ENCODE measurements at regions of chr19 and their contacts with region 1.

Region 1: GRCh38 chr19:18855647-18856384 is 24.1 kb downstream of the UPF1 start:
- DNase-seq: no peak
- ATAC-seq: no peak
- H3K4me3 ChIP-seq: no peak overlapping the region
- H3K4me3 Mint-ChIP-seq: no peak overlapping the region
- H3K27ac ChIP-seq: no peak overlapping the region
- H3K27ac Mint-ChIP-seq: no peak overlapping the region
- H3K4me1 ChIP-seq: peaks cover 0 to 7% of the 10 kb centered on the region in 2 donors
- H3K4me1 Mint-ChIP-seq: peaks cover under 1% of the 10 kb centered on the region
- H3K27me3 ChIP-seq: no peaks in the 10 kb centered on the region
- H3K27me3 Mint-ChIP-seq: no peaks in the 10 kb centered on the region
- CTCF ChIP-seq: no peak

Region 2: GRCh38 chr19:18636183-18636968 is 219.4 kb before region 1 on chr19:
- CTCF ChIA-PET with region 1: no interaction called
- POLR2A ChIA-PET with region 1: no interaction called
- intact Hi-C with region 1: no loop called
- DNase-seq: peak; percentile 98
- ATAC-seq: peak; percentile 87
- H3K4me3 ChIP-seq: peak overlapping the region in 4 of 5 experiments; percentile 71 to 95 (median 82)
- H3K4me3 Mint-ChIP-seq: peak overlapping the region; percentile 95
- H3K27ac ChIP-seq: peak overlapping the region; percentile 46 to 84
- H3K27ac Mint-ChIP-seq: peak overlapping the region; percentile 95
- H3K4me1 ChIP-seq: peaks cover 12 to 27% of the 10 kb centered on the region in 2 donors
- H3K4me1 Mint-ChIP-seq: peaks cover 25% of the 10 kb centered on the region
- H3K27me3 ChIP-seq: no peaks in the 10 kb centered on the region
- H3K27me3 Mint-ChIP-seq: peaks cover 3% of the 10 kb centered on the region
- CTCF ChIP-seq: no peak

Region 3: DNA sequence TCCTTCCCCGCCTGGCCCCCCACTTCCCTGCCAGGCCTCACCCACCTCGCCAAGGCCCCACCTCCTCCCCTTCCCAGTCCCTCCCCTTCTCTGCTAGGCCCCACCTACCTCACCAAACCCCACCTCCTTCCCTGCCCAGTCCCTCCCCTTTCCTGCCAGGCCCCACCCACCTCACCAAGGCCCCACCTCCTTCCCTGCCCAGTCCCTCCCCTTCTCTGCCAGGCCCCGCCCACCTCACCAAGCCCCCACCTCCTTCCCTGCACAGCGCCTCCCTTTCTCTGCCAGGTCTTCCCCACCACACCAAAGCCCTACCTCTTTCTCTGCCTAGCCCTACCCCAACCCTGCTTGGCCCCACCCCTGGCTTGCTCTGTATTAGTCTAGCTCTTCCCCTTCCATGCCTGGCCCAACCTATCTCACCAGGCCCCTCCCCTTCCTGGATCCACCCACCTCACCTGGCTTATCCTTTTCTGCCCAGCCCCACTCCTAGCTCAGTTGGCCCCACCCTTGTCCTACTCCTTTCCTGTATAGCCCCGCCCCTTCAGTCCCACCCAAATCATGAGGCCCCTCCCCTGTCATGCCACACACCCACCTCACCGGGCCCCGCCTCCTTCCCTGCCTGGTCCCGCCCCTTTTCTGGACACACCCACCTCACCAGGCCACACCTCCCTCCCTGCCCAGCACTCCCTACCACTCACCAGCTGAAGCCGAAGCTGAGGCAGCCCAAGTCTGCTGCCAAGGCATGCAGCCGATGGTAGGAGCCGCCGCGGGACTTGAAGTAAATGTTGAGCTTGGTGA is 24.0 kb after region 1 on chr19:
- CTCF ChIA-PET with region 1: interaction called, 3 read pairs
- POLR2A ChIA-PET with region 1: interaction called, 10 read pairs
- intact Hi-C with region 1: no loop called
- DNase-seq: peak; percentile 34
- ATAC-seq: peak; percentile 39
- H3K4me3 ChIP-seq: no peak overlapping the region
- H3K4me3 Mint-ChIP-seq: no peak overlapping the region
- H3K27ac ChIP-seq: no peak overlapping the region
- H3K27ac Mint-ChIP-seq: no peak overlapping the region
- H3K4me1 ChIP-seq: no peaks in the 10 kb centered on the region
- H3K4me1 Mint-ChIP-seq: no peaks in the 10 kb centered on the region
- H3K27me3 ChIP-seq: no peaks in the 10 kb centered on the region
- H3K27me3 Mint-ChIP-seq: no peaks in the 10 kb centered on the region
- CTCF ChIP-seq: no peak